ENCODE measurements at regions of chr4 and their contacts with region 1.

Region 1: GRCh38 chr4:135238940-135239339 is 1037.4 kb upstream of the PABPC4L start:
- DNase-seq: no peak
- ATAC-seq: no peak
- H3K4me3 ChIP-seq: no peak overlapping the region
- H3K27ac ChIP-seq: no peak overlapping the region
- H3K4me1 ChIP-seq: no peaks in the 10 kb centered on the region
- H3K27me3 ChIP-seq: no peaks in the 10 kb centered on the region
- CTCF ChIP-seq: no peak

Region 2: GRCh38 chr4:134243742-134244713 is 994.9 kb before region 1 on chr4:
- intact Hi-C with region 1: no loop called
- DNase-seq: peak in 1 of 4 donors; percentile 69
- ATAC-seq: no peak
- H3K4me3 ChIP-seq: no peak overlapping the region
- H3K27ac ChIP-seq: no peak overlapping the region
- H3K4me1 ChIP-seq: no peaks in the 10 kb centered on the region
- H3K27me3 ChIP-seq: no peaks in the 10 kb centered on the region
- CTCF ChIP-seq: no peak

Region 3: DNA sequence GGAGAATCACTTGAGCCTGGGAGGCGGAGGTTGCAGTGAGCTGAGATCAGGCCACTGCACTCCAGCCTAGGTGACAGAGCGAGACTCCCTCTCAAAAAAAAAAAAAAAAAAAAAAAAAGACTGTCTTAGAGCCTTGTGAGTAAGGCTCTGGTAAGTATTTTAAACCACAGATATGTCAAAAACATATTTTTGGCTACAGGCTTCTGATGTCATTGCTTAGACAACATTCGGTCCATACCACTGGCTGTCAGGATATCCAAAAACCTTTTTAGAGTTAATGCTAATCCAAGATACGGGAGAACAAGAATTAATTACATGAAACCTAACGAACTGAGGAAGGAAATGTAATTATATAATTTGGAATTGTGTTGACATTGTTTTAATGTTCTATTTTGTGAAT is 37.9 kb before region 1 on chr4:
- intact Hi-C with region 1: loop called in 1 of 2 experiments (anchors 5 kb)
- DNase-seq: no peak
- ATAC-seq: no peak
- H3K4me3 ChIP-seq: no peak overlapping the region
- H3K27ac ChIP-seq: no peak overlapping the region
- H3K4me1 ChIP-seq: no peaks in the 10 kb centered on the region
- H3K27me3 ChIP-seq: no peaks in the 10 kb centered on the region
- CTCF ChIP-seq: no peak

Measured in left lung (tissue), 14 donors.